ENCODE measurements at regions of chr9 and their contacts with region 1.

Region 1: GRCh38 chr9:122099271-122099869 is 6.3 kb upstream of the TTLL11 start:
- DNase-seq: peak; percentile 85
- ATAC-seq: peak; percentile 74
- H3K4me3 Mint-ChIP-seq: peak overlapping the region; percentile 32
- H3K27ac Mint-ChIP-seq: no peak overlapping the region
- H3K4me1 Mint-ChIP-seq: peaks cover 13% of the 10 kb centered on the region
- H3K27me3 Mint-ChIP-seq: peaks cover 24% of the 10 kb centered on the region

Region 2: DNA sequence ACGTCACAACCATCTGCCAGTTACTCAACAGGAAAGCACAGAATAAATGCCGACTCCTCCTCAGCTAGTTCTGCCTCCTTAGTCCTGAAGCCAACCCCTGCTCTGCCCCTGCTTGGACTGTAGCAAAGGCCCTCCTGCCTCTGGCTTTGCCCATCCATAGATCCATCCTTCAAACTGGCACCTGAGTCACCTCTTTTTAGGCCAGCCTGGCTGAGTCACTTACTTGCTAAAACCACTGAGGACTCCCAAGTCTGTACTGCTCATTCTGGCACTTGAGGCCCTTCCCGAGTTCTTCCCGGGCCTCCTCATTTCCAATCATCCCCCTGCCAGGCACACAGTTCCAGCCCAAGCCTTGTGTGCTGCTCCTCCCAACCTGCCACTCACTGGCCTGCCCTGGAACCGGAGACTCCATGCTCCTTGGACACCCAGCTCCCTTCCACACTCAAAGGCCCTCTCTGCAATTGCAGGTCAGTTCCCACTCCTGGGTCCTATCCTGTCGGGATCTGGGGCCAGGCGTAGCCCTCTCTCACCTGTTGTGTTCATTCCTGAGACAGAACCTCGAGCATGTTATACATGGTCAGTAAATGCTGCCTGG is 227.8 kb before region 1 on chr9:
- CTCF ChIA-PET with region 1: no interaction called
- POLR2A ChIA-PET with region 1: no interaction called
- DNase-seq: no peak
- ATAC-seq: no peak
- H3K4me3 Mint-ChIP-seq: no peak overlapping the region
- H3K27ac Mint-ChIP-seq: no peak overlapping the region
- H3K4me1 Mint-ChIP-seq: no peaks in the 10 kb centered on the region
- H3K27me3 Mint-ChIP-seq: peaks cover 2% of the 10 kb centered on the region

Region 3: GRCh38 chr9:122087406-122088200 is 11.8 kb before region 1 on chr9:
- CTCF ChIA-PET with region 1: interaction called, 34 read pairs
- POLR2A ChIA-PET with region 1: no interaction called
- DNase-seq: no peak
- ATAC-seq: no peak
- H3K4me3 Mint-ChIP-seq: no peak overlapping the region
- H3K27ac Mint-ChIP-seq: no peak overlapping the region
- H3K4me1 Mint-ChIP-seq: peaks cover 19% of the 10 kb centered on the region
- H3K27me3 Mint-ChIP-seq: no peaks in the 10 kb centered on the region

Region 4: GRCh38 chr9:122116040-122116439 is 16.7 kb after region 1 on chr9:
- CTCF ChIA-PET with region 1: interaction called, 254 read pairs
- POLR2A ChIA-PET with region 1: no interaction called
- DNase-seq: no peak
- ATAC-seq: no peak
- H3K4me3 Mint-ChIP-seq: no peak overlapping the region
- H3K27ac Mint-ChIP-seq: no peak overlapping the region
- H3K4me1 Mint-ChIP-seq: no peaks in the 10 kb centered on the region
- H3K27me3 Mint-ChIP-seq: peaks cover 4% of the 10 kb centered on the region

Region 5: GRCh38 chr9:122144836-122145591 is 45.6 kb after region 1 on chr9:
- CTCF ChIA-PET with region 1: interaction called, 16 read pairs
- POLR2A ChIA-PET with region 1: no interaction called
- DNase-seq: no peak
- ATAC-seq: no peak
- H3K4me3 Mint-ChIP-seq: no peak overlapping the region
- H3K27ac Mint-ChIP-seq: no peak overlapping the region
- H3K4me1 Mint-ChIP-seq: peaks cover 2% of the 10 kb centered on the region
- H3K27me3 Mint-ChIP-seq: no peaks in the 10 kb centered on the region

Region 6: GRCh38 chr9:122810306-122810946 is 711.1 kb after region 1 on chr9:
- CTCF ChIA-PET with region 1: interaction called, 13 read pairs
- POLR2A ChIA-PET with region 1: no interaction called
- DNase-seq: peak; percentile 85
- ATAC-seq: peak; percentile 73
- H3K4me3 Mint-ChIP-seq: no peak overlapping the region
- H3K27ac Mint-ChIP-seq: no peak overlapping the region
- H3K4me1 Mint-ChIP-seq: peaks cover 34% of the 10 kb centered on the region
- H3K27me3 Mint-ChIP-seq: no peaks in the 10 kb centered on the region

Measured in activated CD8-positive, alpha-beta T cell treated with anti-CD3 and anti-CD28 coated beads, Interleukin-2, amount 10 ng/mL, durations not matched to agents 7 days and 5 days (primary cell).